ENCODE measurements at regions of chr7 and their contacts with region 1.

Region 1: GRCh38 chr7:74068393-74069085 is 15.1 kb upstream of the LIMK1 start:
- DNase-seq: no peak
- H3K4me3 Mint-ChIP-seq: no peak overlapping the region
- H3K27ac Mint-ChIP-seq: no peak overlapping the region
- H3K4me1 Mint-ChIP-seq: no peaks in the 10 kb centered on the region
- H3K27me3 Mint-ChIP-seq: no peaks in the 10 kb centered on the region

Region 2: GRCh38 chr7:73799267-73800141 is 269.0 kb before region 1 on chr7:
- CTCF ChIA-PET with region 1: no interaction called
- POLR2A ChIA-PET with region 1: no interaction called
- intact Hi-C with region 1: no loop called
- DNase-seq: no peak
- H3K4me3 Mint-ChIP-seq: no peak overlapping the region
- H3K27ac Mint-ChIP-seq: no peak overlapping the region
- H3K4me1 Mint-ChIP-seq: no peaks in the 10 kb centered on the region
- H3K27me3 Mint-ChIP-seq: peaks cover 3% of the 10 kb centered on the region

Region 3: DNA sequence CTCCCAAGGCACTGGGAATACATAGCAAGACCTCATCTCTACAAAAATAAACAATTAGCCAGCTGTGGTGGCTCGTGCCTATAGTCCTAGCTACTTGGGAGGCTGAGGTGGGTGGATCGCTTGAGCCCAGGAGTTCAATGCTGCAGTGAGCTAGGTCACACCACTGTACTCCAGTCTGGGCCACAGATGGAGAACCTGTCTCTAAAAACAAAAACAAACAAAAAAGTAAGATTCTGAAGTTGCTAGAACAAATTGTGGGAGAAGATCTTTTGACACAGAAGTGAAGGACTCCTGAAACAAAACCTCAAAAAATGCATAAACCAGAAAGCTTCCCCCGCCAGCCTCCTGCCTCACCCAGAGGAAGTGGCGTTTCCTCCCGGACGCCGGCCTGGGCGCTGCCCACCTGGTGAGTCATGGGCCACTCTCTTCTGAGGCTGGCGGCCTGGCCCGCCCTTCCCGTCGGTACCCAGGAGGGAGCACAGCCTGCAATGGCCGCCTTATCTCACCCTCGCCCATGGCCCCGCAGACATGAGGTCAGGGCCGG is 66.0 kb before region 1 on chr7:
- CTCF ChIA-PET with region 1: no interaction called
- POLR2A ChIA-PET with region 1: no interaction called
- intact Hi-C with region 1: no loop called
- DNase-seq: peak; percentile 17
- H3K4me3 Mint-ChIP-seq: no peak overlapping the region
- H3K27ac Mint-ChIP-seq: peak overlapping the region; percentile 42
- H3K4me1 Mint-ChIP-seq: peaks cover 6% of the 10 kb centered on the region
- H3K27me3 Mint-ChIP-seq: peaks cover 5% of the 10 kb centered on the region

Region 4: DNA sequence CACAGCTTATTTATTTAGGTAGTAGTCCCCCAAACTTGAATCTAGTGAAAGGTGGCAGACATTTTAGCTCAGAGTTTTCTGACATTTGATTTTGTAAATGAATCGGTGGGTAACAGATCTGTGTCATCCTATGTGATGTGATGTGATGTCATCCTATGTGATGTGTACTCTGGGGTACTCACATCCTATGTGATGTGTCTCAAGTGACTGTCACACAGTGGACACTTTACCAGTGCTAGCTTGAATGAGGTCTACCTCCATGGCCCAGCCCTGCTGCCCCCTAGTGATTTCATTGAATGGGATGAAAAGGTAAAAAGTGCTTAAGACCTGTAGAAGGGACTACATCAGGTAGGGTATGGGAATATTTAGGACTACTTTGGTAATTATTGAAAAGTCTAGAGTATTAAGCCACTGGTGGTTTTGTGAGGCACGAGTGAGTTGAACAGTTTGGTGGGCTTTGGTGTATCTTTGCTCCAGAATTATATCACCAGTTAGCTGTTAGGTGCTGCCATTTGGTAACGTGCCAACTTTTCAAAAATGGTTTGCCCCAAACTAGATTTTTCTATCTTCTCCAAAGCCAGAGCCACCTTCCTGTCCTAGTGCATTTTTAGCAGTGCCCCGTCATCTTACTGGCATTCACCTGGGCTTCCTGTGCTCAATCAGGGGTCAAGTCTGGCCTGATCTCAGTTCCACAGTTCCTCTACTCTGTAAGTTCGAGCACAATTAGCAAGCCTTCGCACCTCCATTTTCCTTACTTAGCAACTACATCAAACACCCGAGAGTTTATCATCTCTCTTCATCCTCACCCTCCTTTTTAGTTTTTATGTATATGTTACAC is 115.3 kb after region 1 on chr7:
- CTCF ChIA-PET with region 1: interaction called, 9 read pairs
- POLR2A ChIA-PET with region 1: interaction called, 3 read pairs
- intact Hi-C with region 1: loop called (anchors 1 kb)
- DNase-seq: peak; percentile 49
- H3K4me3 Mint-ChIP-seq: no peak overlapping the region
- H3K27ac Mint-ChIP-seq: peak overlapping the region; percentile 74
- H3K4me1 Mint-ChIP-seq: peaks cover 78% of the 10 kb centered on the region
- H3K27me3 Mint-ChIP-seq: no peaks in the 10 kb centered on the region